Esophagus muscularis mucosa (tissue), 4 donors: ENCODE measurements at regions of chr7 and their contacts with region 1.

Region 1: DNA sequence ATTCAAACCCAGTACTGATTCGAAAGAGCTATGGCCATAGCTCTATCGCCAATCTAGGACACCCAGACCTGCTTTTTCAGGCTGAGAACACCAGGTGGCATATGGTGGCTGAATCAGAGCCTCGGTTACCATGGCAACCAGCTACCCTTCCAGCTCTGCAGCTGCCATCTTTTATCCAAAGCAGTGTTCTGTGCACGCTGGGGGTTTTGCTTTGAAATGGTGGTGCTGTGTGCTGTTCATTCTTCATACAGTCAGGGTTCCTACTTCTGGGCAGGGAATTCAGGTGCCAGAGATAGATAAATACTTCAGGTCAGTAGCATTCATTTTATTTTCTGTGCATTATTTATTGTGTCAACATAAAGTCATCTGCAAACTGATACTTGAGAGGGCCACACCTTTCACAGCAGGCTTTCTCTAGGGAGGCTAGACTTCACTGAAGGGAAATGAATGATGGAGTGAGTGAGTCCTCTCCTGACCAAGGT is 85.4 kb downstream of the AKR1D1 start:
- DNase-seq: no peak
- H3K4me3 ChIP-seq: no peak overlapping the region
- H3K27ac ChIP-seq: no peak overlapping the region
- H3K4me1 ChIP-seq: no peaks in the 10 kb centered on the region
- H3K27me3 ChIP-seq: no peaks in the 10 kb centered on the region
- CTCF ChIP-seq: peak; percentile 30 to 47 (median 43)
- EP300 ChIP-seq: no peak
- POLR2A ChIP-seq: no peak

Region 2: GRCh38 chr7:138257459-138258196 is 96.0 kb after region 1 on chr7:
- intact Hi-C with region 1: no loop called
- DNase-seq: no peak
- H3K4me3 ChIP-seq: no peak overlapping the region
- H3K27ac ChIP-seq: no peak overlapping the region
- H3K4me1 ChIP-seq: no peaks in the 10 kb centered on the region
- H3K27me3 ChIP-seq: no peaks in the 10 kb centered on the region
- CTCF ChIP-seq: no peak
- EP300 ChIP-seq: no peak
- POLR2A ChIP-seq: no peak

Region 3: GRCh38 chr7:138738551-138739335 is 577.1 kb after region 1 on chr7:
- intact Hi-C with region 1: loop called (anchors 5 kb)
- DNase-seq: no peak
- H3K4me3 ChIP-seq: no peak overlapping the region
- H3K27ac ChIP-seq: no peak overlapping the region
- H3K4me1 ChIP-seq: no peaks in the 10 kb centered on the region
- H3K27me3 ChIP-seq: no peaks in the 10 kb centered on the region
- CTCF ChIP-seq: peak; percentile 62 to 80 (median 73)
- EP300 ChIP-seq: no peak
- POLR2A ChIP-seq: no peak